ENCODE measurements at regions of chr17 and their contacts with region 1.

Region 1: GRCh38 chr17:7515911-7516610 is 31.9 kb downstream of the POLR2A start:
- DNase-seq: no peak
- H3K4me3 ChIP-seq: no peak overlapping the region
- H3K27ac ChIP-seq: no peak overlapping the region
- H3K4me1 ChIP-seq: no peaks in the 10 kb centered on the region
- H3K27me3 ChIP-seq: no peaks in the 10 kb centered on the region
- CTCF ChIP-seq: no peak
- POLR2A ChIP-seq: no peak

Region 2: DNA sequence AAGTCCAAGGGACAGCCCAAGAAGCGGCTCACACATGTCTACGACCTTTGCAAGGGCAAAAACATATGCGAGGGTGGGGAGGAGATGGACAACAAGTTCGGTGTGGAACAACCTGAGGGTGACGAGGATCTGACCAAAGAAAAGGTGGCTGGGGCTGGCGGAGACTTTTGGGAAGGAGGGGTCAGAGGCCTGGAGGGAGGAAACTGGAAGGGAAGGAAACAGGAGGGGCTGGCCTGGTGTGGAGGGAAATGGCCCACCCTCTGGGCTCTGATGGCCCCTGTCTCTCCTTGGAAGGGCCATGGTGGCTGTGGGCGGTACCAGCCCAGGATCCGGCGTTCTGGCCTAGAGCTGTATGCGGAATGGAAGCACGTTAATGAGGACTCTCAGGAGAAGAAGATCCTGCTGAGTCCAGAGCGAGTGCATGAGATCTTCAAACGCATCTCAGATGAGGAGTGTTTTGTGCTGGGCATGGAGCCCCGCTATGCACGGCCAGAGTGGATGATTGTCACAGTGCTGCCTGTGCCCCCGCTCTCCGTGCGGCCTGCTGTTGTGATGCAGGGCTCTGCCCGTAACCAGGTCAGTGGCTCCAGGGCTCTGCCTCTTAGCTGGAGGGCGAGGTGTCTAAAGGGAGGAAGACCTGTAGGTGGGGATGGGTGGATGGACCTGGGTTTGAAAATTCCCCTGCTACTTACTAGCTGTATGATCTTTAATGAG is 19.4 kb before region 1 on chr17:
- CTCF ChIA-PET with region 1: interaction called, 15 read pairs
- POLR2A ChIA-PET with region 1: no interaction called
- dilution Hi-C with region 1: no loop called
- intact Hi-C with region 1: no loop called
- DNase-seq: peak; percentile 19
- H3K4me3 ChIP-seq: no peak overlapping the region
- H3K27ac ChIP-seq: peak overlapping the region; percentile 51
- H3K4me1 ChIP-seq: peaks cover 23% of the 10 kb centered on the region
- H3K27me3 ChIP-seq: no peaks in the 10 kb centered on the region
- CTCF ChIP-seq: no peak
- POLR2A ChIP-seq: no peak

Region 3: GRCh38 chr17:7538891-7539290 is 22.8 kb after region 1 on chr17:
- CTCF ChIA-PET with region 1: interaction called, 11 read pairs
- POLR2A ChIA-PET with region 1: no interaction called
- dilution Hi-C with region 1: no loop called
- intact Hi-C with region 1: no loop called
- DNase-seq: peak; percentile 21
- H3K4me3 ChIP-seq: no peak overlapping the region
- H3K27ac ChIP-seq: no peak overlapping the region
- H3K4me1 ChIP-seq: no peaks in the 10 kb centered on the region
- H3K27me3 ChIP-seq: peaks cover 0 to 9% of the 10 kb centered on the region in 2 experiments
- CTCF ChIP-seq: no peak
- POLR2A ChIP-seq: no peak

Region 4: GRCh38 chr17:7548585-7549400 is 32.7 kb after region 1 on chr17 and contains the start of gene TNFSF12:
- CTCF ChIA-PET with region 1: interaction called, 32 read pairs
- POLR2A ChIA-PET with region 1: no interaction called
- dilution Hi-C with region 1: no loop called
- intact Hi-C with region 1: no loop called
- DNase-seq: peak; percentile 40
- H3K4me3 ChIP-seq: peak within 1 kb of the TSS; percentile 24 to 60 (median 40)
- H3K27ac ChIP-seq: no peak within 1 kb of the TSS
- H3K4me1 ChIP-seq: peaks cover 10% of the 10 kb centered on the region
- H3K27me3 ChIP-seq: no peaks in the 10 kb centered on the region
- CTCF ChIP-seq: peak in 1 of 2 donors; percentile 31
- POLR2A ChIP-seq: peak; percentile 72
- total RNA-seq, gene TNFSF12: 21.0 and 28.4 TPM in 2 replicates

Region 5: DNA sequence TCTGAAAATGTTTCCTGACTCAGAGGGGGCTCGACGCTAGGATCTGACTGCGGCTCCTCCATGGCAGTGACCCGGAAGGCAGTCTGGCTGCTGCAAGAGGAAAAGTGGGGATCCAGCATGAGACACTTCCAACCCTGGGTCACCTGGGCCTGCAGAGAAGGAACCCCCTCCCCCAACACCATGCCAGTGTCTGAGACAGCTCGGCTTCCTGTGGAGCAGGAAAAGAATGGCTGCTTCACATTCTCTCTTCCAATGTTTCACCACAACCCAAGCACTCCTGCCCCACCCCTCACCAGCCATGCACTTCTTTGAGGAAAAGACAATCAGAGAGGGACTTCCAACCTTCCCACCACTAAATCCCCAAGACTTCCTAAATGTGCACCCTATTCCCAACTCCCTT is 160.5 kb after region 1 on chr17:
- CTCF ChIA-PET with region 1: no interaction called
- POLR2A ChIA-PET with region 1: no interaction called
- dilution Hi-C with region 1: no loop called
- intact Hi-C with region 1: no loop called
- DNase-seq: no peak
- H3K4me3 ChIP-seq: no peak overlapping the region
- H3K27ac ChIP-seq: no peak overlapping the region
- H3K4me1 ChIP-seq: peaks cover 15% of the 10 kb centered on the region
- H3K27me3 ChIP-seq: no peaks in the 10 kb centered on the region
- CTCF ChIP-seq: no peak
- POLR2A ChIP-seq: no peak